Mammary epithelial cell (primary cell): ENCODE measurements at regions of chr3 and their contacts with region 1.

Region 1: DNA sequence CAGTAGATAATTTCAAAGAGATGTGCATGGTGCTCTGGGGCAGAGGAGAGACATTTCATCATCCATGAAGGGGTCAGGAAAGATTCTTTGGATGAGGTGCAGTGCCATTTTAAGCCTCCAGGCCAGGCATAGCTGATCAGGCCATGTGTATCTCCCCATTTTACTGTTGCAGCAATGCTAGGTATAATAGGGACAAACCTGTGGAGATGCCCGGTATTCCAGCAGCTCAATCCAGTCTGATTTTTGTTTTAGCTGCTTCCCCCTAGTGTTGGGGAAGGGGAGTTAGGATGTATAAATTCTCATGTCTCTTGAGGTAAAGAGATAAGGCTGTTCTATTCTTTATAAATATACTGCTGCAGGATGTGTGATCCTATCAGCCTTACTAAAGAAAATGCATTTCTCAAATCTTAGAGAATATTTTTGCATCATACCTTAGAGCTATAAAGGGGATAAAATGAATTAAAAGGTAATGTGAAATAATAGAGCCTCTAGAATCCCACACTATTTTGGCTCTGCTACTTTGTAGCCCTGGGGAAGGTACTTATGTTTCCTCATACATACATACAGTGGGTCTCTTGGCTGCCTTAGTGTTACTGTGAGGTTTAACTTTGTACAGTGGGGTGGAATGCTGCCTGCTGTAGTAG is 5.2 kb downstream of the CDV3 start:
- DNase-seq: peak; percentile 46
- H3K4me3 ChIP-seq: no peak overlapping the region
- H3K27ac ChIP-seq: no peak overlapping the region
- H3K4me1 ChIP-seq: peaks cover 8% of the 10 kb centered on the region
- H3K27me3 ChIP-seq: no peaks in the 10 kb centered on the region
- CTCF ChIP-seq: peak; percentile 61 to 66

Region 2: GRCh38 chr3:132722164-132723024 is 856.3 kb before region 1 on chr3 and contains the start of gene NPHP3:
- CTCF ChIA-PET with region 1: no interaction called
- dilution Hi-C with region 1: no loop called
- in situ Hi-C with region 1: loop called in 1 of 2 experiments (anchors 25 kb)
- intact Hi-C with region 1: loop called (anchors 5 kb)
- DNase-seq: peak; percentile 92
- H3K4me3 ChIP-seq: peak within 1 kb of the TSS; percentile 80 to 96 (median 94)
- H3K27ac ChIP-seq: peak within 1 kb of the TSS; percentile 68
- H3K4me1 ChIP-seq: peaks cover 4% of the 10 kb centered on the region
- H3K27me3 ChIP-seq: no peaks in the 10 kb centered on the region
- CTCF ChIP-seq: no peak
- total RNA-seq, gene NPHP3: 22.8 to 24.5 TPM

Region 3: DNA sequence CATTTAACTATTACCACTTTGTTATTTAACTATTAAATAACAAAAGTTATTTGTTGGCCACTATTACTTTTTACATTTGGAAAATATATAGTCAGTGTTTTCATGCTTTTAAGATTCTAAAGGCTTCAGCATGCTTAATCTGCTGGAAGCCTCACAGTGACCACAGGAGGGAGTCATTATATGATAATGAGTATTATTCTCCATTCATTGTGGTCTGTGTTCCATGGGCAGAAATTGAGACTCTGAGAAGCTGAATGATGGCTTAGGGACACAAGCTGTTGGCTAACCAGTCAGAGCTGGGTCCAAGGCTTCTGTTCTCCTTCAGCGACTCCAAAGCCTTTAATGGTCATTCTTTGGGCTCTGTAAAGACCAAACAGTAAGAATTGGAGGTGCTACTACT is 114.1 kb before region 1 on chr3:
- CTCF ChIA-PET with region 1: no interaction called
- dilution Hi-C with region 1: no loop called
- in situ Hi-C with region 1: loop called in 1 of 2 experiments (anchors 10 kb)
- intact Hi-C with region 1: loop called (anchors 2 kb)
- DNase-seq: peak; percentile 24
- H3K4me3 ChIP-seq: no peak overlapping the region
- H3K27ac ChIP-seq: no peak overlapping the region
- H3K4me1 ChIP-seq: no peaks in the 10 kb centered on the region
- H3K27me3 ChIP-seq: no peaks in the 10 kb centered on the region
- CTCF ChIP-seq: peak; percentile 31 to 46

Region 4: GRCh38 chr3:133487920-133488540 is 90.6 kb before region 1 on chr3:
- CTCF ChIA-PET with region 1: interaction called, 3 read pairs
- dilution Hi-C with region 1: loop called (anchors 5 kb)
- in situ Hi-C with region 1: no loop called
- intact Hi-C with region 1: loop called (anchors 1 kb)
- DNase-seq: no peak
- H3K4me3 ChIP-seq: no peak overlapping the region
- H3K27ac ChIP-seq: no peak overlapping the region
- H3K4me1 ChIP-seq: peaks cover 6% of the 10 kb centered on the region
- H3K27me3 ChIP-seq: no peaks in the 10 kb centered on the region
- CTCF ChIP-seq: peak; percentile 27 to 69